ENCODE measurements at regions of chr3 and their contacts with region 1.

Region 1: DNA sequence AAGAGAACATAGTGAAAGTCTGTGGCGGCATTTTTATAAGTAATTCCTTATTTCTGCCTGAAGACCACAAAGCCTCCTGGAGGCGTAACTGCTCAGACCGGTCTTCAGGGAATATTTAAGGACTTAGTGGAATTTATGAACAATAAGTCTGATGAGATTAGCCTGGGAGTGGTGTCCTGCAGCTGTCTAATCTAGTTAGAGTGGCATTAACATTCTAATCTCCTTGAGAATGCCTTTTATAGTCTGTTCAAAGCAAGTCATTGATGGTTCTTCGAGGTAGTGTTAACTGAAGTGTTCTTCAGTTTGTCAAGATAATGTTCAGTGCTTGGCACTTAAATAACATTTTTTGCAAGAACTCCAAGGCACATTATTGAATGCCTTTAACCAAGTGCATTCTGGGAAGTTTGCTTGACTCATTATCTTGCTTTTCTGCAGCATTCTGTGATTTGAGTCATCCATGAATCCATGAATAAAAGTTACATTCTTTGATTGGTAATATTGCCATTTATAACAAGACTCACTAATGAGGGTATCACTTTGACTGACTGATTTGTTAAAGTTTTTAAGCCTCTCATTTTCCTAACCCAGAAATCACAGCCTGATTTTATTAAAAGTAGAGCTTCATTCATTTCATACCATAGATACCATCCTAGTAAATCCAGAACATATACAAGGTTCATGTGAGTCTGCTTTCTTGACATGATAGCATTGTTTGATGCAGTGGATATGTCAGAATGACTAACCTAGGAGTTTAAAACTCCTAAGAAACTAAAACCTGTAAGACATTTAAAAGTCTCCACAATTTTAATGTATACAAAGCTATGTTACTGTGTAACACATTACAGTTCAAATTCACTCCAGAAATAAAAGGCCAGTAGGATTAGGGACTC is 12.5 kb downstream of the RBM5 start:
- DNase-seq: no peak
- H3K4me3 ChIP-seq: no peak overlapping the region
- H3K27ac ChIP-seq: no peak overlapping the region
- H3K4me1 ChIP-seq: no peaks in the 10 kb centered on the region
- H3K27me3 ChIP-seq: no peaks in the 10 kb centered on the region

Region 2: GRCh38 chr3:49333091-49333490 is 768.1 kb before region 1 on chr3:
- CTCF ChIA-PET with region 1: no interaction called
- POLR2A ChIA-PET with region 1: no interaction called
- DNase-seq: no peak
- H3K4me3 ChIP-seq: no peak overlapping the region
- H3K27ac ChIP-seq: peak overlapping the region in 1 of 2 experiments; percentile 5
- H3K4me1 ChIP-seq: peaks cover 0 to 2% (median under 1%) of the 10 kb centered on the region in 4 experiments
- H3K27me3 ChIP-seq: no peaks in the 10 kb centered on the region

Region 3: DNA sequence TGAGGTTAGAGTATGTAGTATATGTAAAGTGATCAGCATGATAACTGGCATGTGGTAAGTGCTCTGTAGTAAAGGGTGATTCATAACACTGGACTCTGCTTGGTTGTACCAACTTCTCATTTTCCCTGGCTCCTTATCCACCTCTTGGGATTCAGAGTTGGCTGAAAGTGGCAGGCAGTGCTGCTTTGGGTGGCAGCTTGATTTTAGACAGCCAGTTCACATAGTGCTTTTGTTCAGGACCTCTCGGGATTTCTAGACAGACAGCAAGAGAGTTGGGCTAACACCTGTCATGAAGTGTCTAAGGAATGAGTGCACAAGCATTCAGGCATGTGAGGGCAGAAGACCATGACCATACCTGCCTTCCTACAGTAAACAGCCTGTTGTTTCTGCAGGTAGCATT is 92.3 kb before region 1 on chr3:
- CTCF ChIA-PET with region 1: no interaction called
- POLR2A ChIA-PET with region 1: no interaction called
- DNase-seq: no peak
- H3K4me3 ChIP-seq: no peak overlapping the region
- H3K27ac ChIP-seq: no peak overlapping the region
- H3K4me1 ChIP-seq: no peaks in the 10 kb centered on the region
- H3K27me3 ChIP-seq: no peaks in the 10 kb centered on the region

Region 4: GRCh38 chr3:50088725-50089608 is 12.2 kb before region 1 on chr3 and contains the start of gene RBM5:
- CTCF ChIA-PET with region 1: interaction called, 11 read pairs
- POLR2A ChIA-PET with region 1: interaction called, 7 read pairs
- DNase-seq: peak; percentile 94 to 97 (median 96)
- H3K4me3 ChIP-seq: peak within 1 kb of the TSS; percentile 78 to 100 (median 97)
- H3K27ac ChIP-seq: peak within 1 kb of the TSS; percentile 99
- H3K4me1 ChIP-seq: peaks cover 14 to 22% (median 18%) of the 10 kb centered on the region in 4 experiments
- H3K27me3 ChIP-seq: no peaks in the 10 kb centered on the region

Region 5: GRCh38 chr3:50126287-50127211 is 25.3 kb after region 1 on chr3:
- CTCF ChIA-PET with region 1: no interaction called
- POLR2A ChIA-PET with region 1: no interaction called
- DNase-seq: no peak
- H3K4me3 ChIP-seq: no peak overlapping the region
- H3K27ac ChIP-seq: no peak overlapping the region
- H3K4me1 ChIP-seq: peaks cover 0 to 6% (median 2%) of the 10 kb centered on the region in 4 experiments
- H3K27me3 ChIP-seq: no peaks in the 10 kb centered on the region

Region 6: GRCh38 chr3:50138266-50139200 is 37.3 kb after region 1 on chr3:
- CTCF ChIA-PET with region 1: no interaction called
- POLR2A ChIA-PET with region 1: no interaction called
- DNase-seq: peak in 2 of 3 donors; percentile 31 to 35
- H3K4me3 ChIP-seq: peak overlapping the region in 1 of 7 experiments; percentile 34
- H3K27ac ChIP-seq: no peak overlapping the region
- H3K4me1 ChIP-seq: peaks cover 0 to 29% (median 20%) of the 10 kb centered on the region in 4 experiments
- H3K27me3 ChIP-seq: peaks cover 0 to 2% (median 0%) of the 10 kb centered on the region in 5 experiments